IMR-90 (cell line): ENCODE measurements at regions of chr19 and their contacts with region 1.

Region 1: GRCh38 chr19:46021531-46022041 is 1.3 kb downstream of the PGLYRP1 start:
- DNase-seq: no peak
- ATAC-seq: no peak
- H3K4me3 ChIP-seq: no peak overlapping the region
- H3K27ac ChIP-seq: no peak overlapping the region
- H3K4me1 ChIP-seq: no peaks in the 10 kb centered on the region
- H3K27me3 ChIP-seq: peaks cover 2% of the 10 kb centered on the region; the same call in 1 of the 2 replicates
- CTCF ChIP-seq: no peak
- POLR2A ChIP-seq: no peak
- RAD21 ChIP-seq: no peak

Region 2: GRCh38 chr19:45887200-45887710 is 134.3 kb before region 1 on chr19:
- CTCF ChIA-PET with region 1: no interaction called
- POLR2A ChIA-PET with region 1: no interaction called
- dilution Hi-C with region 1: no loop called
- in situ Hi-C with region 1: no loop called
- intact Hi-C with region 1: no loop called
- DNase-seq: no peak
- ATAC-seq: no peak
- H3K4me3 ChIP-seq: peak overlapping the region; percentile 74
- H3K27ac ChIP-seq: peak overlapping the region; percentile 92
- H3K4me1 ChIP-seq: peaks cover 10% of the 10 kb centered on the region
- H3K27me3 ChIP-seq: no peaks in the 10 kb centered on the region
- CTCF ChIP-seq: no peak
- POLR2A ChIP-seq: no peak
- RAD21 ChIP-seq: no peak

Region 3: GRCh38 chr19:46068345-46069258 is 47.0 kb after region 1 on chr19:
- CTCF ChIA-PET with region 1: interaction called, 4 read pairs
- POLR2A ChIA-PET with region 1: no interaction called
- dilution Hi-C with region 1: no loop called
- in situ Hi-C with region 1: loop called (anchors 10 kb)
- intact Hi-C with region 1: loop called (anchors 2 kb)
- DNase-seq: peak; percentile 82
- ATAC-seq: peak; percentile 68
- H3K4me3 ChIP-seq: no peak overlapping the region
- H3K27ac ChIP-seq: no peak overlapping the region
- H3K4me1 ChIP-seq: peaks cover 2% of the 10 kb centered on the region; the same call in 1 of the 2 replicates
- H3K27me3 ChIP-seq: peaks cover 26% of the 10 kb centered on the region
- CTCF ChIP-seq: no peak
- POLR2A ChIP-seq: no peak
- RAD21 ChIP-seq: no peak

Region 4: DNA sequence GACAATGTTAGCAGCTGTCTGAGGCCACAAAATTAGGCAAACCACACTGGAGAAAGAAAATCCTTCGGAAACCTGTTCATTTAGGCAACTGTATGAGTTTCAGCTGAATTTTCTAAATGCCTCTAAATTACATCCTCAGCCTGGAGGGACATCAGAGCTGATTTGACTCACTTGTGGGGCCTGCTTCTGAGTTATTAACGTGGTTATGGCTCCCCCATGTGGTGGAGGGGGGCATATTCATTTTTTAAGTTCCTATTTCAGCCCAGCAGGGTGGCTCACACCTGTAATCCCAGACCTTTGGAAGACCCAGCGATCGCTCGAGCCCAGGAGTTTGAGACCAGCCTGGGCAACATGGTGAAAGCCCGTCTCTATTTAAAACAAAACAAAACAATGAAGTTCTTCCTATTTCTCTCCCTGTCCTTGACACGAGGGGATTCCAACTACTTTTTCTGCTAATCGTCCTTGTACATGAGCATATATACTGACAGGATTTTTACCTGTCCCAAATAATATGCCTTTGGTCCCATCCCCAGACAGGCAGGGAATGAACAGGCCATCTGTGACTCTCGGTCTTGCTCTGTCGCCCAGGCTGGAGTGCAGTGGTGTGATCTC is 243.7 kb after region 1 on chr19:
- CTCF ChIA-PET with region 1: no interaction called
- POLR2A ChIA-PET with region 1: no interaction called
- dilution Hi-C with region 1: no loop called
- in situ Hi-C with region 1: loop called (anchors 5 kb)
- intact Hi-C with region 1: no loop called
- DNase-seq: peak; percentile 74
- ATAC-seq: peak; percentile 99
- H3K4me3 ChIP-seq: no peak overlapping the region
- H3K27ac ChIP-seq: no peak overlapping the region
- H3K4me1 ChIP-seq: no peaks in the 10 kb centered on the region
- H3K27me3 ChIP-seq: peaks cover 35% of the 10 kb centered on the region
- CTCF ChIP-seq: peak; percentile 91
- POLR2A ChIP-seq: no peak
- RAD21 ChIP-seq: peak; percentile 85